Pancreas (tissue), 10 donors: ENCODE measurements at regions of chr9 and their contacts with region 1.

Region 1: DNA sequence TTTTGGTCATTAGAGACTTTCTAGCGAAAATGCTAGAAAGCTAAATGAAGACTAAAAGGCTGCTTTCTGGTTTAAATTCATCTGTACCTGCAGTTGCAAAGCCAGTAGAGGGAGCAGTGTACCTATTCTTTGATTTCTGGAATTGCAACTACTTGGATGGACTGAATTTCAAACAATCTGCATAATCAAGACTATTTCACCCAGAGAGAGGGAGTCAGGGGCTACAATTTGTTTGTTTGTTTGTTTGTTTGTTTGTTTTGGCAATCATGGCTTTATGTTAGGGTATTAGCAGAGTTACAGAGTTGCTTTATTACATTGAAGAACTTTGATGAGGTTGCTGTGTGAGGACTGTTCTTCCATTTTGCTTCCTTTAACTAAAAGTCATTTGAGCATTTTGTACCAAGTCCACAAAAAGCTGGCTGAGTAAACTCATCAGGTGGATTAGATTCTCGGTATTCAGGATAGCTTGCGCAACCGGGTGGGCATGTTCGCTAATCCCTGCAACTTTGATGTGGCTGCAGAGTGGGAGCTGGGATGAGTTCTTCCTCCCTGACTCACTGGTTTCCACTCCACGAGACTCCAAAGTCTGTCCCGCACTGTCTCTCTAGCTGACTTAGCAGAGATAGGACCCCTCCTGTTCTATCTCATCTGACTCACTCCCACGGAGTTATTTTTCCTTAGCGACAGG is 80.0 kb upstream of the TUT7 start:
- DNase-seq: peak in 1 of 6 donors; percentile 44
- ATAC-seq: peak; percentile 48 to 92 (median 82)
- H3K4me3 ChIP-seq: no peak overlapping the region
- H3K27ac ChIP-seq: no peak overlapping the region
- H3K4me1 ChIP-seq: no peaks in the 10 kb centered on the region
- H3K27me3 ChIP-seq: no peaks in the 10 kb centered on the region
- CTCF ChIP-seq: peak; percentile 45 to 60 (median 54)

Region 2: DNA sequence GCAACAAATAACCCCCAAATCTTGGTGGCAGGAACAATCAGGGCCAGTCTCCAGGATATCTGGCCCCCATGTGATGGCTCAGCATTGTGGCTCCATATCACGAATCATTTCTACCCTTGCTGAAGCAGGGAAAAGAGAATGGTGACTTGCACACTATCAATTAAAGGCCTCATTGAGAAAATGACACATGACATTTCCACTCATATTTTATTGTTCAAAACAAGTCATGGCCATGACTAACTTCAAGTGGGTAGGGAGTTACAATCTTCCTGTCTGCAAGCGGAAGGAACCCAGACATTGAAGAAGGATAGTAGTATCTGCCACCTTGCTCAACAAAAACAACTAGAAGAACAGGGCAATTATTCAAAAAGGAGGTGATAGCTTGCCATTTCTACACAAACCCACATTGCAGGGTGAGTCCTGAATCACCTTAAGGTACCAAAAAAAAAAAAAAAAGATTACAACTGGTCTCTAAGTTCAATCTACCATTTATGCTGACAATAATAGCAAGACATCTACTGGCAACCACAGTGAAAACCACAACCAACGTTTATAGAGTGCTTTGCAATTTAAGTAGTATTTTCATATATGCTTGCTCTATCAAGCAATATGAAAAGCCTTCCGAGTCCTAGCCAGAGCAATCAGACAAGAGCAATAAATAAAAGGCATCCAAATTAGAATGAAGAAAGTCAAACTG is 876.8 kb after region 1 on chr9:
- intact Hi-C with region 1: loop called in 1 of 3 experiments (anchors 10 kb)
- DNase-seq: no peak
- ATAC-seq: no peak
- H3K4me3 ChIP-seq: no peak overlapping the region
- H3K27ac ChIP-seq: no peak overlapping the region
- H3K4me1 ChIP-seq: no peaks in the 10 kb centered on the region
- H3K27me3 ChIP-seq: no peaks in the 10 kb centered on the region
- CTCF ChIP-seq: no peak

Region 3: DNA sequence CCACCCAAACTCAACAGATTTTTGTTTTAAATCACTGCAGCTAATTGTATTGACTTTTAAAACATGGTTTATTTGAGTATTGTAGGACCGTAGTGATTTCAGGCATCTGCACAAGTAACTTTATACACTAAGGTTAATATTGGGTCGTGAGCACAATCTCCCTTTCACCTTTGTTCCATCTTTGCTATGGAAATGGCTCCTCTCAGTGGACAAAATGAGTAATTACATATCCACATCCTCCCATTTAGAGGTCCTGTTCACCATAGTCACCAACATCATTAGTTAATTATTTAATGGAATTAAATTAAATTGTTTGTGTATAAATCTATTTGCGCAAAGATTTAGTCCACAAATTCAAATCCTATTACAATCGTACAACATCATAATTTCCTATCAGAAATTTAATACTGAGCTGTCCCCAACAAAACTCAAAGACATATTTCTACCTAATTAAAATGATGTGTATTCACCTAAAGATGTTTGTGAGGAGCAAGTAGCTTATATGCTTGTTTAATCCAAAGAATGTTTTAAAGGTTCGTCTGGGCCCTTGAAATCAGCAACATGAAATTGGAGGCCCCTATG is 890.5 kb after region 1 on chr9:
- intact Hi-C with region 1: loop called in 2 of 3 experiments (anchors 10 kb)
- DNase-seq: no peak
- ATAC-seq: peak; percentile 83 to 96 (median 91)
- H3K4me3 ChIP-seq: no peak overlapping the region
- H3K27ac ChIP-seq: no peak overlapping the region
- H3K4me1 ChIP-seq: no peaks in the 10 kb centered on the region
- H3K27me3 ChIP-seq: no peaks in the 10 kb centered on the region
- CTCF ChIP-seq: peak; percentile 50 to 64 (median 60)